ENCODE measurements at regions of chr6 and their contacts with region 1.

Region 1: GRCh38 chr6:32529697-32530429 is at the start of gene HLA-DRB5:
- DNase-seq: peak; percentile 43
- total RNA-seq, gene HLA-DRB5: 1.4 to 61.3 TPM

Region 2: GRCh38 chr6:32570363-32570905 is 40.6 kb after region 1 on chr6:
- intact Hi-C with region 1: loop called in 1 of 2 experiments (anchors 5 kb)
- DNase-seq: no peak